Mammary epithelial cell (primary cell): ENCODE measurements at regions of chr7 and their contacts with region 1.

Region 1: GRCh38 chr7:149742075-149742701 is 31.2 kb downstream of the ZNF467 start:
- DNase-seq: peak; percentile 33
- H3K4me3 ChIP-seq: peak overlapping the region; percentile 2 to 12 (median 8)
- H3K27ac ChIP-seq: no peak overlapping the region
- H3K4me1 ChIP-seq: peaks cover 2% of the 10 kb centered on the region
- H3K27me3 ChIP-seq: no peaks in the 10 kb centered on the region
- CTCF ChIP-seq: peak; percentile 86 to 93

Region 2: GRCh38 chr7:149310113-149310836 is 431.9 kb before region 1 on chr7:
- CTCF ChIA-PET with region 1: no interaction called
- dilution Hi-C with region 1: no loop called
- in situ Hi-C with region 1: no loop called
- intact Hi-C with region 1: loop called (anchors 1 kb)
- DNase-seq: peak; percentile 85
- H3K4me3 ChIP-seq: no peak overlapping the region
- H3K27ac ChIP-seq: no peak overlapping the region
- H3K4me1 ChIP-seq: no peaks in the 10 kb centered on the region
- H3K27me3 ChIP-seq: no peaks in the 10 kb centered on the region
- CTCF ChIP-seq: peak; percentile 63 to 71

Region 3: DNA sequence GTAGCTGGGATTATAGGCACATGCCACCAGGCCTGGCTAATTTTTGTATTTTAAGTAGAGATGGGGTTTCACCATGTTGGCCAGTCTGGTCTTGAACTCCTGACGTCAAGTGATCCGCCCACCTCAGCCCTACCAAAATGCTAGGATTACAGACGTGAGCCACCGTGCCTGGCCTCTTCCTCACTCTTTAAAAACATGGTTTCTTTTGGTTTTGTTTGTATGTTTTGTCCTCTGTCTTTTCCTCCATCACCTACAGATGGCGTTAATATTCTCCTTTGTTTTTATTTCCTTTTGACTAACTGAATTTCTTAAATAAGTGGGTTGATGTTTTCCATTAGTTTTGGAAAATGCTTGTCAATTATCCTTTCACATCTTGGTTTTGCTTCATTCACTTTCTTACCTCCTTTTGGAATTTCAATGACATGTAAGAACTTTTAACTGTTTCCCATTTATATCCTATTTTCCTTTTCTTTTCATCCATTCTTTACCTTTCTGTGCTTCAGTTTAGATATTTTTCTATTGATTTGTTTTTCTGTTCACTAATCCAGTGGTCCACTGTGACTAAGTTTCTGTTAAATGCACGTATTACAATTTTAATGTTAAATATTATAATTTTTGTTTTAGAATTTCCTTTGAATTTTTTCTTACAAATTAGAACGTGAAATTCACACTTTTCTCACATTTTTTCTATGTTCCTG is 72.9 kb before region 1 on chr7:
- CTCF ChIA-PET with region 1: no interaction called
- dilution Hi-C with region 1: no loop called
- in situ Hi-C with region 1: loop called in 1 of 2 experiments (anchors 5 kb)
- intact Hi-C with region 1: loop called (anchors 1 kb)
- DNase-seq: peak; percentile 44
- H3K4me3 ChIP-seq: no peak overlapping the region
- H3K27ac ChIP-seq: no peak overlapping the region
- H3K4me1 ChIP-seq: no peaks in the 10 kb centered on the region
- H3K27me3 ChIP-seq: no peaks in the 10 kb centered on the region
- CTCF ChIP-seq: peak; percentile 40 to 52

Region 4: DNA sequence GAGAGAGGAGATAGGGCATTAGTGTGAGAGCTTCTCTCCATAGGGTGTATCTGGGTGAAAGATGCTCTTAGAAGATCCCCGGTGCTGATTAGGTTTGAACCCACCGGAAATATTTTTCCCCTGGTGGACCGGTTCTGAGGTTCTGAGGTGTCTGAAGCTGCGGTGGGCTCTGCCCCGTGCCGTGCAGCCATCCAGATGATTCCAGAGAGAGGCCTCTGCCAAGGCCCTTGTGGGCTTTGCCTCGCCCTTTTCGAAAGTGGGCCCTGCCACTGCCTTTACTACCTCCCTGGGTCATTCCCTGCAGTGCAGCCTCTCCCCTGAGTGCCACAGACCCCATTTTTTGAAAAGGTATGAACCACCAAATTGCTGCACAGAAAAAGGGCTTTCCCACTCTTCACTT is 711.0 kb after region 1 on chr7:
- CTCF ChIA-PET with region 1: no interaction called
- dilution Hi-C with region 1: no loop called
- in situ Hi-C with region 1: no loop called
- intact Hi-C with region 1: no loop called
- DNase-seq: no peak
- H3K4me3 ChIP-seq: no peak overlapping the region
- H3K27ac ChIP-seq: no peak overlapping the region
- H3K4me1 ChIP-seq: peaks cover 15% of the 10 kb centered on the region
- H3K27me3 ChIP-seq: peaks cover 2% of the 10 kb centered on the region
- CTCF ChIP-seq: no peak